CD4-positive, alpha-beta memory T cell (primary cell): ENCODE measurements at regions of chr15 and their contacts with region 1.

Region 1: GRCh38 chr15:74842581-74843444 is at the start of gene ULK3:
- DNase-seq: peak; percentile 92 to 94 (median 93)
- H3K4me3 ChIP-seq: peak within 1 kb of the TSS; percentile 81 to 83
- H3K4me3 Mint-ChIP-seq: peak within 1 kb of the TSS; percentile 87 to 92 (median 91)
- H3K27ac ChIP-seq: peak within 1 kb of the TSS; percentile 77
- H3K27ac Mint-ChIP-seq: peak within 1 kb of the TSS; percentile 91 to 97 (median 93)
- H3K4me1 ChIP-seq: peaks cover 52% of the 10 kb centered on the region
- H3K4me1 Mint-ChIP-seq: peaks cover 37 to 57% (median 46%) of the 10 kb centered on the region in 4 donors
- H3K27me3 ChIP-seq: no peaks in the 10 kb centered on the region
- H3K27me3 Mint-ChIP-seq: no peaks in the 10 kb centered on the region
- total RNA-seq, gene ULK3: 84.9 to 88.3 TPM

Region 2: DNA sequence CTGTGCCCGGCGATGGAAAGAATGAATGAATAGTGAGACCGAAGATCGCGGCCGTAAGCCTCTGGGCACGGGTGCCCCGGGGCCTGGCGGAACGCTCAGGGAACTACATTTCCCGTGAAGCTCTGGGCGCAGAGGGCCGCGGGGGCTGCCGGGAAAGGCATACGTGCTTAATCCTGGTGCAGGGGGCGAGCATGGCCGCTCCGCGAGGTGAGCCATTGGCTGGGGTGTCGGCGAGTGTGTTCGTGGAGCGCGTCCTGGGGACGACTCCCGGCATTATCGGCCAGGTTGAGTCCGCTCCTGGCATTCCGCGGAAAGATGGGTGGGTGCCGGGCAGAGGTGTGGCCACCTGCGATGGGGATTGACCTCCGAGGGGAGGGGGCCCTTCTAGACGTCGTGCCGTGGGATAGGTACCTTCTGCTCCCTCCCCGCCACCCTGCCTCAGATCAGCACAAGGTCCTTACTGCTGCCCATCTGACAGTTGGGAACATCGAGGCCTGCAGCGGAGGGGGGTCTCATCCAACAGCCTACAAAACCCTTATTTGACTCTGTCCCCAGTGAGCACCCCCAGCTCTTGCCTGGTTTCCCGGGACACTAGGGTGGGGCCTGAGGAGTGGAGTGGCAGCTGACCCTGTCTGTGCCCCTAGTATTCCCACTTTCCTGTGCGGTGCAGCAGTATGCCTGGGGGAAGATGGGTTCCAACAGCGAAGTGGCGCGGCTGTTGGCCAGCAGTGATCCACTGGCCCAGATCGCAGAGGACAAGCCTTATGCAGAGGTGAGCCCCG is 47.3 kb after region 1 on chr15 and contains the start of gene MPI:
- CTCF ChIA-PET with region 1: interaction called, 12 read pairs
- POLR2A ChIA-PET with region 1: interaction called, 24 read pairs
- intact Hi-C with region 1: loop called (anchors 1 kb)
- DNase-seq: peak; percentile 78 to 86 (median 79)
- H3K4me3 ChIP-seq: peak within 1 kb of the TSS; percentile 94 to 99
- H3K4me3 Mint-ChIP-seq: peak within 1 kb of the TSS; percentile 87 to 97 (median 94)
- H3K27ac ChIP-seq: peak within 1 kb of the TSS; percentile 78
- H3K27ac Mint-ChIP-seq: peak within 1 kb of the TSS; percentile 80 to 97 (median 94)
- H3K4me1 ChIP-seq: peaks cover 58% of the 10 kb centered on the region
- H3K4me1 Mint-ChIP-seq: peaks cover 30 to 54% (median 42%) of the 10 kb centered on the region in 4 donors
- H3K27me3 ChIP-seq: no peaks in the 10 kb centered on the region
- H3K27me3 Mint-ChIP-seq: no peaks in the 10 kb centered on the region
- total RNA-seq, gene MPI: 70.4 to 73.1 TPM

Region 3: GRCh38 chr15:74960995-74961588 is 118.3 kb after region 1 on chr15:
- CTCF ChIA-PET with region 1: no interaction called
- POLR2A ChIA-PET with region 1: no interaction called
- intact Hi-C with region 1: no loop called
- DNase-seq: no peak
- H3K4me3 ChIP-seq: no peak overlapping the region
- H3K4me3 Mint-ChIP-seq: no peak overlapping the region
- H3K27ac ChIP-seq: no peak overlapping the region
- H3K27ac Mint-ChIP-seq: no peak overlapping the region
- H3K4me1 ChIP-seq: peaks cover 26% of the 10 kb centered on the region
- H3K4me1 Mint-ChIP-seq: peaks cover 6 to 24% (median 15%) of the 10 kb centered on the region in 4 donors
- H3K27me3 ChIP-seq: peaks cover 19% of the 10 kb centered on the region
- H3K27me3 Mint-ChIP-seq: peaks cover 19 to 20% of the 10 kb centered on the region in 2 donors